MCF 10A (cell line): ENCODE measurements at regions of chr16 and their contacts with region 1.

Region 1: DNA sequence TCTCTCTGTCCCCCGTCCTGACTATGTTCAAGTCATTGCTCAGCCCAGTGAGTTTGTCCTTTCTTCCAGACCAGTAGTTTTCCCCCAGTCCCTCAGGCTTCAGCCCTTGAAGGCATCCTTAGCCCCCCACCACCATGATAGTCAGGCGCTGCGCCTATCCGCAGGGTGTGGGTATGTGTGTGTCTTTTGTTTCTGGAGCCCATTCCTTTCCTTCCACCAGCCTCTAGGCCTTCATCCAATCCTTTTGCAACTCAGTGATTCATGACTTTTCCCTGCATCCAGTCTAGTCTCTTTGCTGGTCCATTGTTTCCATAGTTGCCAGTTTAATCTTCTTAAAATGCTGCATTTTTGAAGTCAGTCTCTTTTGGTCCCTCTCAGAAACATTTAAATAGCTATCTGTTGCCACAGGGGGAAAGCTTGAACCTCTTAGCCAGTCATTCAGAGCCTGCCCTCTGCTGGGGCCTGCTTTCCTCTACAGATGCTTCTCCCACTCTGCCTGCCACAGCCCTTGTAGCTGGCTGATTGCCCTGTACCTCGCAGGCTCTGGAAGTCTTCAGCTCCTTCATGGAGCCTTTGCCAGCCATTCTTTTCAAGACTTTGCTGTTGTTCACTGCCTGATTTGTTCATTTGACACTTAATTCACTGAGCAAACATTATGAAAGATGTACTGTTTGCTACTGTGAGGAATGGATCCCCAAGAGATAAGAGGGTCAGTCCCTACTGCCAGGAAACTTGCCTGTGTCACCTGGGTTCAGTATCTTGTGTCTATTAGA is 55.9 kb upstream of the ADCY7 start:
- DNase-seq: peak; percentile 72
- H3K4me3 Mint-ChIP-seq: no peak overlapping the region
- H3K27ac Mint-ChIP-seq: peak overlapping the region; percentile 65
- H3K4me1 Mint-ChIP-seq: peaks cover 32% of the 10 kb centered on the region
- H3K27me3 Mint-ChIP-seq: no peaks in the 10 kb centered on the region
- CTCF ChIP-seq: peak; percentile 68

Region 2: GRCh38 chr16:50065624-50066481 is 144.6 kb before region 1 on chr16 and contains the start of gene HEATR3:
- CTCF ChIA-PET with region 1: interaction called, 7 read pairs
- POLR2A ChIA-PET with region 1: interaction called, 3 read pairs
- intact Hi-C with region 1: loop called (anchors 1 kb)
- DNase-seq: peak; percentile 90
- H3K4me3 Mint-ChIP-seq: peak within 1 kb of the TSS; percentile 88
- H3K27ac Mint-ChIP-seq: peak within 1 kb of the TSS; percentile 52
- H3K4me1 Mint-ChIP-seq: peaks cover 23% of the 10 kb centered on the region
- H3K27me3 Mint-ChIP-seq: no peaks in the 10 kb centered on the region
- CTCF ChIP-seq: no peak
- total RNA-seq, gene HEATR3: 10.5 and 13.3 TPM in 2 replicates

Region 3: DNA sequence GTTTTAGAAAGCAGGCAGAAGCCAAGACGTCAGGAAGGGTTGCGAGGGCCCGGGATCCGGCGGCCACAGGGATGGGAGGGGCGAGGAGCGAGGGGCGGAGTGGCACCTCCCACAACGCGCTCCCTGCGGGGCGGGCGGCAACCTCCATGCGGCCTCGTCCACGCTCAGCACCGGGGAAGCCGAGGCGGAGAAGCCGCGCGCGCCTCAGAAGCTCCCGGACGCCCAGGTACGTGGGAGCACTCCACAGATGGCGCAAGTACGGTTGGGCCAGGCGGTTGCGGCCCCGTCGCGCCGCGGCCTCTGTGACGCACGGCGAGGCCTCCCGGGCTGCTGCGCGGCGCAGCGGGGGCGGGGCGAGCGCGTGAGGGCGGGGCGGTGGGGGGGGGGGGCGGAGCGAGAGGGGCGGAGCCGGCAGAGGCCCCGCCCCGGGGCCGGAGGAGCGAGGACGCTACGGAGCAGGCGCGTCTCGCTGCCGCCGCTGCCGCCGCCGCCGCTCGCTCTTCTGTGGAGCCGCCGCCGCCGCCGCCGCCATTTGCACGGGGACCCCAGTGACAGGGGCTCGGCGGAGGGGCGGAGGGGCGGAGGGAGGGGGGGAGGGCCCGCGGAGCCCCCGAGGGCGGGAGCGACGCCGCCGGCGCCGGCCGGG is 57.5 kb before region 1 on chr16 and contains the start of gene TENT4B:
- CTCF ChIA-PET with region 1: interaction called, 5 read pairs
- POLR2A ChIA-PET with region 1: interaction called, 8 read pairs
- intact Hi-C with region 1: loop called (anchors 1 kb)
- DNase-seq: peak; percentile 83
- H3K4me3 Mint-ChIP-seq: peak within 1 kb of the TSS; percentile 76
- H3K27ac Mint-ChIP-seq: peak within 1 kb of the TSS; percentile 84
- H3K4me1 Mint-ChIP-seq: peaks cover 22% of the 10 kb centered on the region
- H3K27me3 Mint-ChIP-seq: no peaks in the 10 kb centered on the region
- CTCF ChIP-seq: no peak
- total RNA-seq, gene TENT4B: 11.5 and 12.1 TPM in 2 replicates

Region 4: DNA sequence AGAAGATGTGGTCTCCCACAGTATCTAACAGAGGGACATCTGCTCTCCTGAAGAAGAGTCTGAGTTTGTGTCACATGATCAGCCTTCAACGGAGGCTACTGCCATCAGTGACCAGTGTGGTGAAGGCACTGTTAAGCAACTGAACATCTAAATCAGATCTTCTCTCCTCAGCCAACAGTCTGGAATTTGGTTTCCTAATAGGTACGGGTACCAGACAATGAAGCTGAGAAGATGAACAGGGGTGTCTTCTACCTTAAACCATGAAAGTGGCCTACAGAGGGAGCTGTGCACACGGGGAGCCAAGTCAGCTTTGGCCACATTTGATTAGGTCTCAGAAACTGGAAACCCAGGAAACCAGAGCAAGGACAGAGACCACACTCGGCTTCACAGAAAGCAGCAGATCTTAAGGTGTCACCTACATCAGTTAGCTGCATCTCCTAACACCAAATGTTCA is 116.5 kb after region 1 on chr16:
- CTCF ChIA-PET with region 1: interaction called, 13 read pairs
- POLR2A ChIA-PET with region 1: no interaction called
- intact Hi-C with region 1: no loop called
- DNase-seq: peak; percentile 54
- H3K4me3 Mint-ChIP-seq: no peak overlapping the region
- H3K27ac Mint-ChIP-seq: no peak overlapping the region
- H3K4me1 Mint-ChIP-seq: no peaks in the 10 kb centered on the region
- H3K27me3 Mint-ChIP-seq: no peaks in the 10 kb centered on the region
- CTCF ChIP-seq: peak; percentile 29

Region 5: DNA sequence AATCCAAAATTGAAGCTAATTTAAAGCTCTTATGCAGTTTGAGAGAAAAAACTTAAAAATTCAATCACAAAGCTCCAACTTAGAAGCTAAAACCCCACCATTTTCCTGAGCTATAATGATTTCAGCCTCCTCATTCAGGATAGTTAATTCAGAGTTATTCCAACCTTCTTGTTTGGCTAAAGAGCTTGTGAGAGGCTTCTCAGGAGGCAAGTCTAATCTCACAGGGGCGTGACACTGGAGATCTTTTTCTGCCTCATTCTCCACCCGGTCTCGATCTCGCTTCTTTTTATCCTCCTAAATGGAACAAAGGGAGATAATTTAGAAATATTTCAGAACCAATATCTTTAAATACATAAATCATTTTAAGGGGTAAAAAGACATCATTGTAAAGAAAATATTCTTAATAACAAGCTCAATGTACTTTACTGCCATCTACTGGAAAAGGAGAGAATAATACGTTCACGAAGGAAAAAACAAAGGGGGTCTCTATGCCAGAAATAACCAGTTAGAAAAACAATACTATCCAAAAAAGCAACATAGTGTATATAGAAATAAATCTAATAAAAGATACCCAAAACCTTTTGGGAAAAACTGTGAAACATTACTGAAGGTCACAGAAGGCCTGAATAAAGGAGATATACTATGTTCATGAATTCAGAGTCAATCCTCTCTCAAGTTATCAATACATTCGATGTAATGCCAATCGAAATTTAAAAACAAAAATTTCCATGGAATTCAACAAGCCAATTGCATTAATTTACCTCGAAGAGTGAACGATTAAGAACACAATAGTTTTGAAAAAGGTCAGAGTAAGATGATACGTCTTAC is 144.4 kb after region 1 on chr16:
- CTCF ChIA-PET with region 1: interaction called, 18 read pairs
- POLR2A ChIA-PET with region 1: interaction called, 3 read pairs
- intact Hi-C with region 1: loop called (anchors 1 kb)
- DNase-seq: no peak
- H3K4me3 Mint-ChIP-seq: no peak overlapping the region
- H3K27ac Mint-ChIP-seq: no peak overlapping the region
- H3K4me1 Mint-ChIP-seq: peaks cover 5% of the 10 kb centered on the region
- H3K27me3 Mint-ChIP-seq: no peaks in the 10 kb centered on the region
- CTCF ChIP-seq: peak; percentile 49